Activated CD8-positive, alpha-beta T cell treated with anti-CD3 and anti-CD28 coated beads, Interleukin-2, amount 10 ng/mL, durations not matched to agents 7 days and 5 days (primary cell): ENCODE measurements at regions of chr3 and their contacts with region 1.

Region 1: DNA sequence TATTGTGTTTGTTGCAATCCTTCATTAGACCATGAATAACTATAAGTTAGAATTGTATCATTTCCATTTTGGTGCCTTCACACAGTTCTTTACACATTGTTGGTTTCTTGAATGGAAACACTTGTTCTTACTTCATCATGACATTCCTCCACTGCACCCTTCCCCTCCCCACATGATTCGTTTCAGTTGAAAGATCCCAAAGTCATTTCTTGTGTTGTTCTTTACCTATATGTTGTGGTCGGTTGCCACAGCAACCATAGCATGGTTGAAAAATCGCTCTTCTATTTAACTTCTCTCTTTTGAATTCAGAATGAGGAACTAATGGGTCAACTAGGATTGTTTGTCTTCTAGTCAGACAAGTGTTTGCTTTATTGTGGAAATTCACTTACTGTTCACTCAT is 103.3 kb downstream of the IL1RAP start:
- DNase-seq: peak; percentile 59
- ATAC-seq: peak; percentile 50
- H3K4me3 Mint-ChIP-seq: no peak overlapping the region
- H3K27ac Mint-ChIP-seq: peak overlapping the region; percentile 82
- H3K4me1 Mint-ChIP-seq: peaks cover 55% of the 10 kb centered on the region
- H3K27me3 Mint-ChIP-seq: no peaks in the 10 kb centered on the region

Region 2: DNA sequence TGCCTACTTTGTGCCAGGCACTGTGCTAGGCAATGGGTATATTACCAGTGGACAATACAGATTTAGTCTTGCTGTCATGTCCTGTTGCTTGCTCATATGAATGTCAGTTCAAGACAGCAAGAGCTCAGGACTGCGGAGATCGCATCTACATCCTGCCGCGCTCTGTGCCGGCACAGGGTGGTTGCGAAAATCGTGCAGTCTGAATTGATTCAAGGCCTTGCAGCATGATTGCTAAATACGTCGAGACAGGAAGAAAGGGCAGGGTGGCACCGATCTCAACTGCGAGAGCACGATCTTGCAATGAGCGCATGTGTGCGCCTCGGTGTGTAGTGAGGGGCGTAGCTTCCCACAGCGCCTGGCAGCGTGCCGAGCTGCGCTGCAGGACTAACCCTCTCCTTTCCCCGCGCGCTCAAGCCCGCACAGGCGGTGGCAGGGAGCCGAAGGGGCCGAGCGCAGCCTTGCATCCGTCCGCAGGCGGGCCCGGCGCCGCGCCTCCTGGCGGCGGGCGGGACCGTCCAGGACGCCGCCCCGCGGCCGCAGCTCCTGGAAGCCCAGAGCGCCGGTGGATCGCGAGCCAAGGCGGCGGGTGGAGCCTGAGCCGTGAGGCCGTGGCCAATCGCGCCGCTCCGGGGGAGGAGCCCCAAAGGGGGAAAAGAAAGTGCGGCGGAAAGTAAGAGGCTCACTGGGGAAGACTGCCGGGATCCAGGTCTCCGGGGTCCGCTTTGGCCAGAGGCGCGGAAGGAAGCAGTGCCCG is 103.6 kb before region 1 on chr3 and contains the start of gene IL1RAP:
- CTCF ChIA-PET with region 1: interaction called, 8 read pairs
- POLR2A ChIA-PET with region 1: interaction called, 44 read pairs
- DNase-seq: peak; percentile 90
- ATAC-seq: peak; percentile 97
- H3K4me3 Mint-ChIP-seq: peak within 1 kb of the TSS; percentile 87
- H3K27ac Mint-ChIP-seq: peak within 1 kb of the TSS; percentile 90
- H3K4me1 Mint-ChIP-seq: peaks cover 30% of the 10 kb centered on the region
- H3K27me3 Mint-ChIP-seq: peaks cover 2% of the 10 kb centered on the region
- total RNA-seq, gene IL1RAP: 10.3 to 11.6 TPM

Region 3: DNA sequence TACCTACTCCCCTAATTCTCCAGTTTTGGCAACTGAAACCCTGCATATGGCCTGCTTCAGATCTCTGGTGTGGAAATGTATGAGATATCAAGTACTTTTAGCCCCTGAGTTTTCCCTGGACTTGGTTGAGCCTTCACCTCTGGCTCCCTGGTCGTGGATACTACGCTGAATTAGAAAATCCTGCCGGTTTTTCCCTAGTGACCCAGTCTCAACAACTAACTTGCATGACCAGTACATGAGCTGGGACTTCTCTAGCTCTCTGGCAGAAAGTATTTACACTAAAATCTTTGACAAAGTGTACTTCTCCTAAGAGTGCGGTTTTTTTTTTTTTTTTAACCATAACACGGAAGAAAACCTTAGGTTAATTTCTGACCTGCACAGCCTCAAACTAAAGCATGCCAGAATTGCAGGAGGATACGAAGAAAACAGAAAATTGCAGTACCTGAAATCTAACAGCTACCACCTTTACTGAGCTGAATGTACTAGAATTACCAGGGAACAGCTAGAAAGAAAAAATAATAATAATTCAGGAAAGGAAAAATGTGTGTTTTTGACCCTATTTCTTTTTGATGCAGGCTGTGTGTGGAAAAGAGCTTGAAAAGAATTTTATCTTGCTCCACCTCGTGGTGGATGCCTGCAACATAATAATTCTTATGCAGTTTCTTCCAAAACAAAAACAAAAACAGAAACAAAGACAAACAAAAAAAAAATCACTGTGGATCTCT is 79.8 kb after region 1 on chr3:
- CTCF ChIA-PET with region 1: interaction called, 10 read pairs
- POLR2A ChIA-PET with region 1: interaction called, 3 read pairs
- DNase-seq: no peak
- ATAC-seq: no peak
- H3K4me3 Mint-ChIP-seq: no peak overlapping the region
- H3K27ac Mint-ChIP-seq: no peak overlapping the region
- H3K4me1 Mint-ChIP-seq: no peaks in the 10 kb centered on the region
- H3K27me3 Mint-ChIP-seq: peaks cover 16% of the 10 kb centered on the region